Aorta (tissue), 5 donors: ENCODE measurements at regions of chr7 and their contacts with region 1.

Region 1: GRCh38 chr7:36670585-36671431 is 53.5 kb downstream of the AOAH start:
- DNase-seq: no peak
- ATAC-seq: peak; percentile 70
- H3K4me3 ChIP-seq: no peak overlapping the region
- H3K27ac ChIP-seq: no peak overlapping the region
- H3K4me1 ChIP-seq: no peaks in the 10 kb centered on the region
- H3K27me3 ChIP-seq: no peaks in the 10 kb centered on the region

Region 2: GRCh38 chr7:36440880-36441279 is 229.9 kb before region 1 on chr7:
- intact Hi-C with region 1: loop called in 1 of 2 experiments (anchors 5 kb)
- DNase-seq: no peak
- ATAC-seq: no peak
- H3K4me3 ChIP-seq: no peak overlapping the region
- H3K27ac ChIP-seq: no peak overlapping the region
- H3K4me1 ChIP-seq: no peaks in the 10 kb centered on the region
- H3K27me3 ChIP-seq: no peaks in the 10 kb centered on the region

Region 3: GRCh38 chr7:36487756-36488336 is 183.0 kb before region 1 on chr7:
- intact Hi-C with region 1: loop called in 1 of 2 experiments (anchors 2 kb)
- DNase-seq: no peak
- ATAC-seq: no peak
- H3K4me3 ChIP-seq: no peak overlapping the region
- H3K27ac ChIP-seq: no peak overlapping the region
- H3K4me1 ChIP-seq: no peaks in the 10 kb centered on the region
- H3K27me3 ChIP-seq: no peaks in the 10 kb centered on the region

Region 4: GRCh38 chr7:36526863-36527548 is 143.8 kb before region 1 on chr7:
- intact Hi-C with region 1: no loop called
- DNase-seq: no peak
- ATAC-seq: no peak
- H3K4me3 ChIP-seq: no peak overlapping the region
- H3K27ac ChIP-seq: no peak overlapping the region
- H3K4me1 ChIP-seq: no peaks in the 10 kb centered on the region
- H3K27me3 ChIP-seq: no peaks in the 10 kb centered on the region

Region 5: GRCh38 chr7:36979810-36980248 is 309.0 kb after region 1 on chr7:
- intact Hi-C with region 1: no loop called
- DNase-seq: no peak
- ATAC-seq: no peak
- H3K4me3 ChIP-seq: no peak overlapping the region
- H3K27ac ChIP-seq: no peak overlapping the region
- H3K4me1 ChIP-seq: no peaks in the 10 kb centered on the region
- H3K27me3 ChIP-seq: peaks cover 0 to 2% of the 10 kb centered on the region in 2 donors